Activated naive CD4-positive, alpha-beta T cell treated with anti-CD3 and anti-CD28 coated beads for 36 hours (primary cell): ENCODE measurements at regions of chr12 and their contacts with region 1.

Region 1: DNA sequence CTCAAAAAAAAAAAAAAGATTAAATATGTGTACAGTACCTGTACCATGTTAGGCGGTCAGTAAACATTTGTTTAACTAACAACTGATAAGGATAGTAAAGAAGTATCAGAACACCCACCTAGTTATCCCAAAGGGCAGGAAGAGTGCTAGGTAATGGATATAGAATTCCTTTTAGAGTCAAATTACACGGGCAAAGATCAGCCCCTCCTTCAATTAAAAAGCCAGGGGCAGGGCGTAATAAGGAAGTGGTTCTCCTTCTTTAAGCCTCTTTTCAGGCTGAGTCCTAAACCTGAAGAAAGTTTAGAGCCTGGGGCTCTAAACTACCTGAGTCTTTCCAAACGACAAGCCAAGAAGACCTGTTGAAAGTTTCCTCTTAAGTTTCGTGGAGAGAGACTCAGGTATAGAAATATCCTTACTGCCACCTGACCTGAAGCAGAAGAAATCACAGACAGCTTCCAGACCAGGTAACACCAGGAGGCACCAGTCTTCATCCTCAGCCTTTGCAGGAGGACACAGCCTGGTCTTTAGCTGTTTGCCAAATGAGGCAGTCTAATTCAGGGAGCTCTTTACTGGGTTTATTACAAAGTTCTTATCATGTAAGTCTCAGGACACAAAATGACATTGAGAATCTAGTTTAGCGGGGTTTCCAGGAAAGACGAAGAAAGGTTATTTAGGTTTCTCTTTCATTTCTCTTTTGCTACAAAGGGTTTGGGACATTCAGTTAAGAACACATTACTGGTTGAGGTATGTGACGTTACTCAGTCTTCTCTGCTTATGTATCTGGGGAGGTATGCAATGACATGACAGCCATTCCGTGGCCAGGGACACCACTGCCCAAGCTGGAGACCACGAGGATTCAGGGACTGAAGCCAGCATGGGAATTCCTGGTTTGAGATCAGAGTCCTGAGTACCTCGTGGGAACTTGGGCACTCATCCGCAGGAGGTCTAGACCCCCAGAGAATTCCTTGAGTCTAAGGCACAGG is at the start of gene BCL2L14:
- DNase-seq: peak; percentile 52
- H3K4me3 Mint-ChIP-seq: peak within 1 kb of the TSS; percentile 85
- H3K27ac Mint-ChIP-seq: peak within 1 kb of the TSS; percentile 90
- H3K4me1 Mint-ChIP-seq: peaks cover 36% of the 10 kb centered on the region
- H3K27me3 Mint-ChIP-seq: no peaks in the 10 kb centered on the region
- total RNA-seq, gene BCL2L14: 19.4 to 21.8 TPM

Region 2: GRCh38 chr12:11705010-11705409 is 366.0 kb before region 1 on chr12:
- CTCF ChIA-PET with region 1: no interaction called
- intact Hi-C with region 1: no loop called
- DNase-seq: no peak
- H3K4me3 Mint-ChIP-seq: no peak overlapping the region
- H3K27ac Mint-ChIP-seq: no peak overlapping the region
- H3K4me1 Mint-ChIP-seq: peaks cover 49% of the 10 kb centered on the region
- H3K27me3 Mint-ChIP-seq: no peaks in the 10 kb centered on the region

Region 3: GRCh38 chr12:12266873-12267741 is 196.1 kb after region 1 on chr12 and contains the start of gene LRP6:
- CTCF ChIA-PET with region 1: no interaction called
- intact Hi-C with region 1: loop called (anchors 2 kb)
- DNase-seq: peak; percentile 81
- H3K4me3 Mint-ChIP-seq: peak within 1 kb of the TSS; percentile 83
- H3K27ac Mint-ChIP-seq: no peak within 1 kb of the TSS
- H3K4me1 Mint-ChIP-seq: peaks cover 18% of the 10 kb centered on the region
- H3K27me3 Mint-ChIP-seq: no peaks in the 10 kb centered on the region
- total RNA-seq, gene LRP6: 3.9 to 4.1 TPM

Region 4: DNA sequence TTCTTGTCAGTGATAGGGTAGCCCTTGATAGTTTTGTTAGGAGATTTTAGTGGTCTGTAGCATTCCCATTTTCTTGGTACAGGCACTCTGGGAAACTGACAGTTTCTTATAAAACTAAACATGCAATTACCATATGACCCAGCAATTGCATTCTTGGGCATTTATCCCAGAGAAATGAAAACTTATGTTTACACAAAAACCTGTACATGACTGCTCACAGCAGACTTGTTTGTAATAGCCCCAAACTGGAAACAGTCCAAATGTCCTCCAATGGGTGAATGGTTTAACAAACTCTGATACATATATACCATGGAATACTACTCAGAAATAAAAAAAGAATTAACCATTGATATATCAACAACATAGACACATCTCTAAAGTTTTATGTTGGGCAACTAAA is 361.4 kb after region 1 on chr12:
- CTCF ChIA-PET with region 1: no interaction called
- intact Hi-C with region 1: no loop called
- DNase-seq: no peak
- H3K4me3 Mint-ChIP-seq: no peak overlapping the region
- H3K27ac Mint-ChIP-seq: no peak overlapping the region
- H3K4me1 Mint-ChIP-seq: peaks cover 38% of the 10 kb centered on the region
- H3K27me3 Mint-ChIP-seq: no peaks in the 10 kb centered on the region